ENCODE measurements at regions of chr19 and their contacts with region 1.

Region 1: GRCh38 chr19:18419195-18419698 is at the start of gene SSBP4:
- DNase-seq: peak; percentile 59 to 83 (median 75)
- H3K4me3 ChIP-seq: peak within 1 kb of the TSS; percentile 81
- H3K4me3 Mint-ChIP-seq: peak within 1 kb of the TSS; percentile 90 to 98 (median 94)
- H3K27ac ChIP-seq: peak within 1 kb of the TSS; percentile 83
- H3K27ac Mint-ChIP-seq: peak within 1 kb of the TSS; percentile 94 to 100 (median 98)
- H3K4me1 ChIP-seq: peaks cover 86% of the 10 kb centered on the region
- H3K4me1 Mint-ChIP-seq: peaks cover 70 to 88% (median 87%) of the 10 kb centered on the region in 3 donors
- H3K27me3 ChIP-seq: peaks cover 4% of the 10 kb centered on the region
- H3K27me3 Mint-ChIP-seq: peaks cover 0 to 6% of the 10 kb centered on the region in 2 donors
- total RNA-seq, gene SSBP4: 111 to 131 TPM

Region 2: DNA sequence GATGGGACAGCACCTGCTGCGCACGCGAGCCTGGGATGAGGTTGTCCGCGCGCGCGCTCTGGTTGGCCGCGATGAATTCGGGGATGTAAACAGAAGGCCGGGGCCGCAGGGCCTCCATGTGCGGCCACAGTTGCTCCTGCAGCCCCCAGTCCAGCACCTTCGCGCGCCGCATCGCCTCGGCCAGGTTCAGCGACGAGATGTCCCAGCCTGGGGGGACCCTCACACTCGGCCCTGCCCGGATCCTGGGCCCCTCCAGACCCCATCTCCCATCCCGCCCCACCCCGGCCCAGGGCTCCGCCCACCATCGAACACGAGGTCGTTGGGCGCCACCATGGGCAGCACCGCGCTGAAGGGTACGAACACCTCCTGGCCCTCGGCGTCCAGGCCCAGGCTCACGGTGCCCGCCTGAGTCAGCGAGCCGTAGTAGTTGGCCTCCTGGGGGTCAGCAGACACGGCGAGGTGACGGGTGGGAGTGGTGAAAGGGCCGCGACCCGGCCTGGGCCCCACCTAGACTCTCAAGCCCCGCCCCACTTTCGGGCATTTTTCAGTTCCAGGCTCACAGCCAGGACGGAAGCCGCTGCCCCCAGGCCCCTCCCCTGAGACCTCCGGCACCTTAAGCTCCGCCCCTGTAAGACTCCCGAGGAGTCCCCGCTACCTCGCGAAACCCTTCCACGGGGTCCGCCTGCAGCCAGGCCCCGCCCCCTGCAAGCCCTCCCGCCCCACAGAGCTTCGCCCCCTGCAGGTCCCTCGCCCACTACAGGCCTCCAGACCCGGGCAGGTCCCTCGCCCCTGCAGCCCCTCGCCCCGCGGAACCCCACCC is 17.6 kb after region 1 on chr19:
- CTCF ChIA-PET with region 1: interaction called, 12 read pairs
- POLR2A ChIA-PET with region 1: interaction called, 42 read pairs
- DNase-seq: peak; percentile 77 to 93 (median 84)
- H3K4me3 ChIP-seq: peak overlapping the region; percentile 37
- H3K4me3 Mint-ChIP-seq: peak overlapping the region; percentile 78 to 95 (median 87)
- H3K27ac ChIP-seq: no peak overlapping the region
- H3K27ac Mint-ChIP-seq: peak overlapping the region in 7 of 8 donors; percentile 43 to 88 (median 74)
- H3K4me1 ChIP-seq: peaks cover 22% of the 10 kb centered on the region
- H3K4me1 Mint-ChIP-seq: peaks cover 17 to 59% (median 19%) of the 10 kb centered on the region in 3 donors
- H3K27me3 ChIP-seq: no peaks in the 10 kb centered on the region
- H3K27me3 Mint-ChIP-seq: peaks cover 0 to 6% of the 10 kb centered on the region in 2 donors